CD8-positive, alpha-beta memory T cell (primary cell): ENCODE measurements at regions of chr10 and their contacts with region 1.

Region 1: DNA sequence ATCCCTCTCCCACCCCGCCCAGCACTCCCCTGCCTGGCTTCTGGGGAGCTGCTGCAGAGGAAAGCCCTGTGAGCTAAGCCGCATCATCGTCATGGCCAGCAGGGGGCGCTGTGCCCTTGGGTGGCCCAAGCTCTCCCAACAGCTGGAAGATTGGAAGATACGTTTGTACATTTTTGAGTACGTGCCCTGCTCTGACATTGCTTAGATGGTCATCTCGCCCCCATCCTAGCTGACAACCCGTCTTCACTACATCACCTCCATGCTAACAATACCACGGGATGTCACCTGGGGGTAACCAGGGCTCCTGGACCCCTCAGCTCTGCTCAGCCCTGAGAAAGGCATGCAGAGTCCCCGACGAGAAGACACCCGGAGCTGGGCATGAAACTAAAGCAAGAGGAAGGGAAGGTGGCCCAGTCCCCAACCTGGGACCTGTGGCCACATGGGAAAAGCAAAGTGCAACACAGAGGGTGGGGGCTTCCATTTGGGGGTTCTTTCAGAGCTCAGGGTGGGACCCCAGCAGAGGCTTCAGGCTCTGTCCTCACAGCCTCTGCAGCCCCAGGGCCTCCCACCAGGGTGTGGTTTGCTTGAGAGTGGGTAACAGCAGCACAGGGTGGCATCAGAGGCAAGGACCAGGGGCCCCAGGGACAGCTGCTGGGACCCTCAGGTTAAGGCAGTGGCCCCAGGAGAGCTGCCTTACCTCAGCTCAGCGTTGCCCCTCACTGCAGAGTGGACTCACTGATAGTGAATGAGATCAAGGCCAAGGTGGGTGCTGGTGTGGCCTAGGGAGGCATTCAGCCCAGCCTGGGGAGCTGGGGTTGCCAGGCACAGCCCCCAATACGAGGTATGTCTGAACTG is 136.7 kb downstream of the PTPN20 start:
- DNase-seq: peak; percentile 45 to 81 (median 58)
- H3K4me3 ChIP-seq: no peak overlapping the region
- H3K4me3 Mint-ChIP-seq: peak overlapping the region in 2 of 7 donors; percentile 22 to 31
- H3K27ac ChIP-seq: no peak overlapping the region
- H3K27ac Mint-ChIP-seq: peak overlapping the region in 2 of 8 donors; percentile 5 to 49
- H3K4me1 ChIP-seq: peaks cover 10% of the 10 kb centered on the region
- H3K4me1 Mint-ChIP-seq: peaks cover 12 to 19% (median 18%) of the 10 kb centered on the region in 3 donors
- H3K27me3 ChIP-seq: no peaks in the 10 kb centered on the region
- H3K27me3 Mint-ChIP-seq: peaks cover 0 to 3% of the 10 kb centered on the region in 2 donors

Region 2: DNA sequence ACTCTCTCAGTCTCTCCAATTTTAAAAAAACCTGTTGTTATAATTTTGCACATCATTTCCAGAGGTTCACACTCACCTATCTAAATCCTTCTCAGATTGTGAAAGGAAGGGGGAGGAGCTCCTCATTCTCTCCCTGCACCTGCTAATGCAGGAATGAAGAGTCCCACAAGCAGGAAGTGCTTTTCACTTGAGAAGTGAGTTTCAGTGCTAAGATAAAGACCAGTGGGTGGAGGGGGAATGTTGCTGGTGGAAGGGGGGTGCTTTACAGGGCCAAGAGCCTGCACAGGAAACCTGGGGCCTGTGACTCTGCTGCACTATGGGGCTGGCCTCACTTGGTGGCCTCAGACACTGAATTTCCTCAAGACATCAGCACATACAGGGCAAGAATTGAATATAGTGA is 39.8 kb after region 1 on chr10:
- CTCF ChIA-PET with region 1: no interaction called
- POLR2A ChIA-PET with region 1: no interaction called
- DNase-seq: no peak
- H3K4me3 ChIP-seq: no peak overlapping the region
- H3K4me3 Mint-ChIP-seq: no peak overlapping the region
- H3K27ac ChIP-seq: no peak overlapping the region
- H3K27ac Mint-ChIP-seq: peak overlapping the region in 1 of 8 donors; percentile 54
- H3K4me1 ChIP-seq: peaks cover 11% of the 10 kb centered on the region
- H3K4me1 Mint-ChIP-seq: peaks cover 0 to 9% (median 0%) of the 10 kb centered on the region in 3 donors
- H3K27me3 ChIP-seq: no peaks in the 10 kb centered on the region
- H3K27me3 Mint-ChIP-seq: peaks cover 3 to 4% of the 10 kb centered on the region in 2 donors

Region 3: DNA sequence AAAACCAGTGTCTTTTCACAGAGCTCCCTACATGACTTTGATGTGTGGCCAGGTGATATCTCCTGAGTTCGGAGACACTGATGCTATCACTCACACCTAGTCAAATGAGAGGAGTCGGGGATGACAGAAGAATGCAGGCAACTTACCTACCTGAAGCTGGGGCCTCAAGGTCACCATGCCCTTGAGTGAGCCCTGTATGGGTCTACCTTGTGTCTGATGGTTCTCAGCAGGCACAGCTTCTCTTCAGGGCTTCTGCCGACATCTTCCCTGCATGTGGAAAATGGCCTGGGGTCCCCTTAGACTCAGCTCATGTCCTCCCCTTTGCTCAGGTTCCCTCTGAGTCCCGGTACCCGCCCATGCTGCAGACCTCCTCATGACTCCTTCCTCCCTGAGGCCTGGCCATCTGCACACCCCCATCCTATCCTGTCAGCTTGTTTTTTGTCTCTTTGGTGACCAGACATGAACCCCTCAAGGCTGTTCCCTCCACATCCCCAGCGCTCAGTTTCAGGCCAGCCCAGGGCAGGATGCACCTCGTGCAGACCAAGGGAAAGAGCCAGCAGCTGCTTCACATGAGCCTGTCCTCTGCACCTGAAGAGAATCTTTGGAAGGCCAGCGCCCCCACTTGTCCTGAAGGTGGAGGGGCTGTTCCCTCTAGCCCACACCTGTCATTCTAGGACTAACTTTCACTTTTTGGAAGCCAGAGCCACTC is 177.5 kb after region 1 on chr10:
- CTCF ChIA-PET with region 1: interaction called, 28 read pairs
- POLR2A ChIA-PET with region 1: no interaction called
- DNase-seq: no peak
- H3K4me3 ChIP-seq: no peak overlapping the region
- H3K4me3 Mint-ChIP-seq: no peak overlapping the region
- H3K27ac ChIP-seq: no peak overlapping the region
- H3K27ac Mint-ChIP-seq: no peak overlapping the region
- H3K4me1 ChIP-seq: no peaks in the 10 kb centered on the region
- H3K4me1 Mint-ChIP-seq: peaks cover 0 to 9% (median 0%) of the 10 kb centered on the region in 3 donors
- H3K27me3 ChIP-seq: no peaks in the 10 kb centered on the region
- H3K27me3 Mint-ChIP-seq: no peaks in the 10 kb centered on the region

Region 4: DNA sequence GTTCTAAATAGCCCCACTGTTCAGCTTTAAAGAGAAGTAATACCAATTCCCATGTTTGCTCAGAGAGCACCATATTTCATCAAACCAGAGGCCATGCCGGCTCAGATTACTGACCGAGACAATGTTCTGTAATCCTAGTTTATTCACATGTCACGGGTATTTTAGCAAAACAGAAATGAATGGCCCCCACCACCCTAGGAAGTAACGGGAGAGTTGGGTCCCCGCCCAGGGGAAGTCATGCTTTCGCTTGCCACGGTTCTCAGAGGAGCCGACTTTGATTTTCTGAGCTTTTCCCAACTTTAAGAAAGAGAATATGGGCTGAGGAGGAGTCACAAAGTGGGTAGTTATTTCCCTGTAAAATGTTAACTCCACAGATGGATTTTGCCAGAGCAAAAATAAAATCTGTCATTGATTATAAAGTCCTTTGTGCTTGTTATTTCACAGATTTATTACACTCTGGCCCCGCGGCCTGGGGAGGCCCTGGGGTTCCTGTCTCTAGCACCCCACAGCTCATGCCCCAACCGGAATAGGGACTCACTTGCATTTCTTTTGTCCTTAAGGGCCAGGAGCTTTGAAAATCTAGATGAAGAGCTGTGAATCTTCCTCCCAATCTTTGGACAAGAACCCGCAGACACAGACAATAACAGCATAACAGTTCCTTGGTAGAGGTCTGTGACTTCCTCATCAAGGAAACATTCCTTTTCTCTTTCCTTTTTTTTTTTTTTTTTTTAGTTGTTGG is 248.4 kb after region 1 on chr10:
- CTCF ChIA-PET with region 1: interaction called, 14 read pairs
- POLR2A ChIA-PET with region 1: no interaction called
- DNase-seq: no peak
- H3K4me3 ChIP-seq: no peak overlapping the region
- H3K4me3 Mint-ChIP-seq: no peak overlapping the region
- H3K27ac ChIP-seq: no peak overlapping the region
- H3K27ac Mint-ChIP-seq: no peak overlapping the region
- H3K4me1 ChIP-seq: no peaks in the 10 kb centered on the region
- H3K4me1 Mint-ChIP-seq: peaks cover 3 to 14% (median 4%) of the 10 kb centered on the region in 3 donors
- H3K27me3 ChIP-seq: no peaks in the 10 kb centered on the region
- H3K27me3 Mint-ChIP-seq: peaks cover 17 to 25% of the 10 kb centered on the region in 2 donors

Region 5: DNA sequence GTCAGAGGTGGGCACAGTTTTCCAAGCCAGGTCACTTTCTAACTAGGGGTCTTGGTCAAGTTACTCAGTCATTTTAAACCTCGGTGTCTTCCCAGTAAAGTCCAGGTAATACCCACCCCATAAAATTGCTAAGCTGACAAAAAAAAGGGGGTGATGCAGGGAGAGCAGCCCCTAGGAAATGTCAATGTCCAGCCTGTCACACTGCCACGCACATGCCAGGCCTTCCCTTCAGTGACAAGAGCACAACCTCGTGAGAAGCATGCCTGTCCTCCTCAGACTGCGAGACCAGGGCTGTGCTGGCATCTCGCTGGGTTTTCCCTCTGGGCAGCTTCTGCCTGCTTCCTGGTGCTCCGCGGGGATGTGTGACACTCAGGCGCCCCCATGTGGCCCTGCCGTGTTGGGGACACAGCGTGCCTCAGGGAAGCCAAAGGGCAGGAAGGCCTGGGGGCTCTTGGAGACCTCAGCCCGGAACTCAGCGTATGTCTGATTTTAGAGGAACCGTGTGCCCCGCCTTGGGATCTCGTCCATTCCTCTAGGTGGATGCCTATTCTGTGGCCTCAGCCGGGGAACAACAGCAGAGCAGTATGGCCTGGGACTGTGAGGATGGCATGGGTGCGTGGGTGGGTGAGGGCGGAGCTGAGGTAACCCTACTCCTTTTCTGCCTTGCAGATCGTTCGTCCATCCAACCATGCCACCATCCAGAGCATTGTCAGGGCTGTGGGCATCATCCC is 264.2 kb after region 1 on chr10:
- CTCF ChIA-PET with region 1: interaction called, 236 read pairs
- POLR2A ChIA-PET with region 1: interaction called, 5 read pairs
- DNase-seq: peak; percentile 54 to 87 (median 69)
- H3K4me3 ChIP-seq: peak overlapping the region; percentile 55
- H3K4me3 Mint-ChIP-seq: peak overlapping the region in 6 of 7 donors; percentile 40 to 73 (median 58)
- H3K27ac ChIP-seq: no peak overlapping the region
- H3K27ac Mint-ChIP-seq: peak overlapping the region; percentile 32 to 84 (median 73)
- H3K4me1 ChIP-seq: peaks cover 32% of the 10 kb centered on the region
- H3K4me1 Mint-ChIP-seq: peaks cover 18 to 26% (median 20%) of the 10 kb centered on the region in 3 donors
- H3K27me3 ChIP-seq: no peaks in the 10 kb centered on the region
- H3K27me3 Mint-ChIP-seq: peaks cover 0 to 1% of the 10 kb centered on the region in 2 donors

Region 6: DNA sequence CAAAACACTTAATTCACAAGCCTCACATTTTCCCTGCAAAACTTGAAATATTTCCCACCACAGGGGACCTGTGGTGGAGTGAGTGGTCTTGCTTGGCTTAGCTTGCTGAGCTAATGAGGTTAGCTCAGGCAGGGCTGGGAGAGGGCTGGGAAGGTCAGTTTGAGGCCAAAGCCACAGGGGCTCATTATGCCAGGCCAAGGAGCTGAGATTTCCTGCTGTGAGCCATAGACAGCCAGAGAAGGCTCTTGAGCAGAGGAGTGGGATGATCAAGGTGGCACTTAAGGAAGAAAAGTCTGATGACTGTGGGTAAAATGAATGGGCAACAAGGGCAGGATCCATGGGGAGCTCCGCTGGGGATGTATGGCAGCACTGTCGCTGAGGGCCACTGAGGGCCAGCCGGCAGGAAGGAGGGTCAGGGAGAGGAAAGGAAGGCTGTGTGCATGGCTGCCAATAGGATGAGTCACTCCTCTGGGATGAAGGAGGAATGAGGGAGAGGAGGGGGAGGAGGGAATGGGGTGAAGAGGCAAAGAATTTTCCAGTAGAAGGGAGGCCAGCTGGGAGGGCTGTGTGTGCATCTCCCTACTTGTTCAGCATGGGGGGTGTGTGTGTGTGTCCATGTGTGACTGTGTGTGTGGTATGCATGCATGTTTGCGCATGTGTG is 354.9 kb after region 1 on chr10:
- CTCF ChIA-PET with region 1: no interaction called
- POLR2A ChIA-PET with region 1: no interaction called
- DNase-seq: no peak
- H3K4me3 ChIP-seq: no peak overlapping the region
- H3K4me3 Mint-ChIP-seq: no peak overlapping the region
- H3K27ac ChIP-seq: no peak overlapping the region
- H3K27ac Mint-ChIP-seq: no peak overlapping the region
- H3K4me1 ChIP-seq: no peaks in the 10 kb centered on the region
- H3K4me1 Mint-ChIP-seq: no peaks in the 10 kb centered on the region
- H3K27me3 ChIP-seq: no peaks in the 10 kb centered on the region
- H3K27me3 Mint-ChIP-seq: peaks cover 19 to 37% of the 10 kb centered on the region in 2 donors